Activated naive CD4-positive, alpha-beta T cell treated with anti-CD3 and anti-CD28 coated beads, Interleukin-2, amount 10 ng/mL, durations not matched to agents 7 days and 5 days (primary cell): ENCODE measurements at regions of chr11 and their contacts with region 1.

Region 1: DNA sequence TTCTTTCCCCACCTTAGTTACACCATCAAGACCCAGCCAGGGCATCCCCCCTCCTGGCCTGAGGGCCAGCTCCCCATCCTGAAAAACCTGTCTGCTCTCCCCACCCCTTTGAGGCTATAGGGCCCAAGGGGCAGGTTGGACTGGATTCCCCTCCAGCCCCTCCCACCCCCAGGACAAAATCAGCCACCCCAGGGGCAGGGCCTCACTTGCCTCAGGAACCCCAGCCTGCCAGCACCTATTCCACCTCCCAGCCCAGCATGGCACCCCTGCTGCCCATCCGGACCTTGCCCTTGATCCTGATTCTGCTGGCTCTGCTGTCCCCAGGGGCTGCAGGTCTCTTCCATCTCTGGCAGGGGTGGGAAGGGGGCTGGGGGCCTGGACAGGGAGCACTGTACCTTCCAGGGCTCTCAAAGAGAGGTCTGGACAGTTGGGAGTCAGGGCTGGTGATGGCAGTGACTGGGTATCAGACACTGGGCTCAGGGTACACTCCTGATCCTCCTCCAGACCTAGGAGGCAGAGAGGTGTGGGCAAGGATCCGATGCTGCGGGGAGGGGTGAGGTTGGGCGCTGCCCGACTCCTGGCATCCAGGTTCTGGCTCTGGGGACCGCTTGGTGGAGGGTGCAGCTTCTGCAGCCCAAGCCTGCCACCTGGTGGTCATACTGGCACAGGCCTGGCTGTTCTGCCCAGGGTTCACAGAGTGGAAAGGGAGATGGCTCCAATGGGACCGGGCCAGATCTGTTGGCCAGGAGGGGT is at the start of gene UPK2:
- DNase-seq: peak; percentile 93
- H3K4me3 Mint-ChIP-seq: no peak within 1 kb of the TSS
- H3K27ac Mint-ChIP-seq: no peak within 1 kb of the TSS
- H3K4me1 Mint-ChIP-seq: peaks cover 3% of the 10 kb centered on the region
- H3K27me3 Mint-ChIP-seq: peaks cover 55% of the 10 kb centered on the region

Region 2: GRCh38 chr11:118834427-118835028 is 121.7 kb before region 1 on chr11:
- CTCF ChIA-PET with region 1: no interaction called
- DNase-seq: no peak
- H3K4me3 Mint-ChIP-seq: peak overlapping the region; percentile 52
- H3K27ac Mint-ChIP-seq: peak overlapping the region; percentile 82
- H3K4me1 Mint-ChIP-seq: peaks cover 16% of the 10 kb centered on the region
- H3K27me3 Mint-ChIP-seq: no peaks in the 10 kb centered on the region

Region 3: GRCh38 chr11:118907051-118908042 is 48.9 kb before region 1 on chr11:
- CTCF ChIA-PET with region 1: interaction called, 15 read pairs
- DNase-seq: peak; percentile 91
- H3K4me3 Mint-ChIP-seq: no peak overlapping the region
- H3K27ac Mint-ChIP-seq: peak overlapping the region; percentile 68
- H3K4me1 Mint-ChIP-seq: peaks cover 50% of the 10 kb centered on the region
- H3K27me3 Mint-ChIP-seq: no peaks in the 10 kb centered on the region